GM18951 (cell line): ENCODE measurements at regions of chr6 and their contacts with region 1.

Region 1: GRCh38 chr6:87929843-87930288 is 117.8 kb upstream of the SPACA1 start:
- POLR2A ChIP-seq: no peak

Region 2: GRCh38 chr6:87879132-87879861 is 50.6 kb before region 1 on chr6:
- in situ Hi-C with region 1: no loop called
- POLR2A ChIP-seq: no peak

Region 3: DNA sequence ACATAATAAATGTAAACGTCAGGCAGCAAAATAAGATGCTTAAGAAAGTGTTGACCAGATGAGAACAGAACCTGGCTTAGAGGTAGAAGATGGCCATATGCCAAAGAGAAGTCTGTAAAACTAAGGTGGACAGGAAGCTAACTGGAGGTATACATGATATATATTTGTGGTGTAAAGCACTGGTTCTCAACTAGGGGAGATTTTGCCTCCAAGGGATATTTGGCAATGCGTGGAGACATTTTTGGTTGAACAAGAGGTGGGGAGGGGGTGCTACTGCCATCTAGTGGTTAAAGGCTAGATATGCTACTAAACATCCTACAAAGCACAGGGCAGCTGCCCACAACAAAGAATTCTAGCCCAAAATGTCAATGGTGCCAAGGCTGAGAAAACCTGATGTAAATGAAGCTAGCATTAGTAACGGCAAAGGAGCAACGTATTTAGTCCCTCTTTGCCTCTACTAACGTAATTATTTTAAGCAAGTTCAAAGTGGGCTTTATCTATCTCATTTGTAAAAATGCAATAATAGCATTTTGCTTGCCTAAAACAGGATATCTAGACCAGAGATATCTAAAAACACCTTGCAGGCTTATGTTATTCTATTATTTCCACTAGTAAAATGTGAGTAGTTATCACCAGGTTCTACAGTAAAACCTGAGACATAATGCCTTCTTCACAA is 851.0 kb after region 1 on chr6:
- in situ Hi-C with region 1: loop called (anchors 10 kb)
- POLR2A ChIP-seq: no peak

Region 4: GRCh38 chr6:88870717-88871330 is 941.0 kb after region 1 on chr6:
- in situ Hi-C with region 1: loop called (anchors 25 kb)
- POLR2A ChIP-seq: no peak